ENCODE measurements at regions of chr10 and their contacts with region 1.

Region 1: DNA sequence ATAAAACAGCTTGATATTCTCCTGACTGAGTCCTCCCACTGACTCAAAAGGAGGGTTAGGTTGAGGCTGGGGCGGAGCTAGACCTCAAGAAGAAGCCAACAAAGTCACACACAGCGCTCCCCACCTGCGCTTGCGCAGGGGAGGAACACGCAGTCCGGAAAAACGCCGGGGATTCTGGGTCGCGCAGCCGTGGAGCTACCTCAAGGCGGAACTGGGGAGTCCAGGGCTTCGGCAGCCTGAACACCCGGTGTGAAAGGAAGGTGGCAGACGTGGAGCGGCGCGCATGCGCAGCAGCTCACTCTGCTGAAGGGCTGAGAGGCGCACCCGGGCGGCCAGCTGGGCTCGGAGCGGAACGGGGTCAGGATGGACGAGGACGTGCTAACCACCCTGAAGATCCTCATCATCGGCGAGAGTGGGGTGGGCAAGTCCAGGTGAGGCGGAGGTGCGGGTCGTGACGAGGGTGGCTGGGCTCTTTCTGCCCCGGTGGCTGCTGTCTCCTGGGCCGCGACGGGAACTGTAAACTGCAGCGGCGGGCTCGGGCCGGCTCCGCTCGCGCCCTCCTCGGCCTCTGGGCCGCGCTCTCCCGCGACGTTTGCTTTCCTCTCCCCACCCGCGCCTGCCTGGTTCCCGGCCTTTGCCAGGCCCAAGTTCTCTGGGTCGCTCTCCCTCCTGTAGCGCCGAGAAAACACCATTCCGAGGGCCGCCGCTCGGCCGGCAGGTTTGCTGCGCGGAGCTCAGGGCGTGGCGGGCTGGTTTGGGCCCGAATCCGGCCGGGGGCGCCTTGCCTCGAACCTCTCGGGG is at the start of gene RAB18:
- DNase-seq: peak; percentile 94 to 99 (median 98)
- ATAC-seq: peak; percentile 95
- H3K4me3 ChIP-seq: peak within 1 kb of the TSS; percentile 73 to 82
- H3K4me3 Mint-ChIP-seq: peak within 1 kb of the TSS; percentile 99
- H3K27ac ChIP-seq: peak within 1 kb of the TSS; percentile 81 to 90
- H3K27ac Mint-ChIP-seq: peak within 1 kb of the TSS; percentile 98
- H3K4me1 ChIP-seq: peaks cover 33% of the 10 kb centered on the region
- H3K4me1 Mint-ChIP-seq: peaks cover 52% of the 10 kb centered on the region
- H3K27me3 ChIP-seq: no peaks in the 10 kb centered on the region
- H3K27me3 Mint-ChIP-seq: no peaks in the 10 kb centered on the region
- CTCF ChIP-seq: no peak
- total RNA-seq, gene RAB18: 130 to 146 TPM

Region 2: DNA sequence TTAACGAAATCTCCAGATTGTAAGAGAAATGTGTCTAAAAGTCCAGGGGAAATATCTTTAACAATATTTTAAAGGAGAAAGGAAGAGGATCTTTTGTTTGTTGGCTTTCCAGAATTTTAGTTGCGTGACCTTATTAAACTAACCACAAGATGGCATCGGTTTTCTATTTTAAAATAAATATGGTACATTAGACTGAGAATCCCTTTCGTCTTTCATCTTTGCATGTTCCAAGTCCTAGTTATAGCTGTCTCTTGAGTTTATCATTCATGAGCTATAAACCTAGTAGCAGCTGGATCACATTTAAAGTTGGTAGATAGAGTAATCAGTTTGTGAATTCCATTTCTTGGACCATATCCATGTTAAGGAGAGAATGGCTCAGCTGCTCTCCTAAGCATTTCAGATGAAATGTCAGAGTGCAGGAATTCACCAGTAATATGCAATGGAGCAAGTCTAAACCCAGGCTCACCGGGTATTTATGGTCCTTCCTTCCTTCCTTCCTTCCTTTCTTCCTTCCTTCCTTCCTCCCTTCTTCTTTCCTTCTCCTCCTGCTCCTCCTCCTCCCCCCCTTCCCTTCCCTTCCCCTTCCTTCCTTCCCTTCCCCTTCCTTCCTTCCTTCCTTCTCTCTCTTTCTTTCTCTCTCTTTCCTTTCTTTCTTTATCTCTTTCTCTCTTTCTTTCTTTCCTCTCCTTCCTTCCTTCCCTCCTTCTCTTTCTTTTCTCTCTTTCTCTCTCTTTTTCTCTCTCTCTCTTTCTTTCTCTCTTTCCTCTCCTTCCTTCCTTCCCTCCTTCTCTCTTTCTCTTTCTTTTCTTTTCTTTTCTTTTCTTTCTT is 57.9 kb before region 1 on chr10:
- CTCF ChIA-PET with region 1: interaction called, 14 read pairs
- POLR2A ChIA-PET with region 1: interaction called, 7 read pairs
- intact Hi-C with region 1: loop called in 1 of 2 experiments (anchors 2 kb)
- DNase-seq: peak in 2 of 9 experiments; percentile 38 to 60
- ATAC-seq: peak; percentile 46
- H3K4me3 ChIP-seq: no peak overlapping the region
- H3K4me3 Mint-ChIP-seq: no peak overlapping the region
- H3K27ac ChIP-seq: no peak overlapping the region
- H3K27ac Mint-ChIP-seq: no peak overlapping the region
- H3K4me1 ChIP-seq: peaks cover 9% of the 10 kb centered on the region
- H3K4me1 Mint-ChIP-seq: peaks cover 21% of the 10 kb centered on the region
- H3K27me3 ChIP-seq: no peaks in the 10 kb centered on the region
- H3K27me3 Mint-ChIP-seq: no peaks in the 10 kb centered on the region
- CTCF ChIP-seq: peak; percentile 61

Region 3: DNA sequence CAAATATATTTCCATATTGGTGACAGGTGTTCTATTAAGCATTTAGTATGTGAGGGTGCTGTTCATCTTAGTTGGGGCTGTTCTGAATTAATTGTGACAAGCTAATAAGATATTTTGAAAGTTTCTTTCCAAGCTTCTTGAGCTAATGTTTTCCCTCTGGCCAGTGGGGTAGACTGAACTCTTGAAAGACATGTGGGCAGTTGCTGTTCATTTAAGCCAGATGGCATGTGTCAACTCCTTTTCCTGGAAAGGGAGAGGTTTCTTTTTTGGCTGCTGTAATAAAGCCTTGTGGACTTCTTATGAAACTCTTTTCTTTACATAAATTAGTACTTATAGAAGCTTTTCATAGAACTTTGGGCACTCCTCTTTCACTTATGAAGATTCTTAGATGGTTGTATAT is 21.6 kb after region 1 on chr10:
- CTCF ChIA-PET with region 1: interaction called, 4 read pairs
- POLR2A ChIA-PET with region 1: interaction called, 5 read pairs
- intact Hi-C with region 1: loop called in 1 of 2 experiments (anchors 2 kb)
- DNase-seq: no peak
- ATAC-seq: no peak
- H3K4me3 ChIP-seq: no peak overlapping the region
- H3K4me3 Mint-ChIP-seq: no peak overlapping the region
- H3K27ac ChIP-seq: no peak overlapping the region
- H3K27ac Mint-ChIP-seq: no peak overlapping the region
- H3K4me1 ChIP-seq: peaks cover 5% of the 10 kb centered on the region
- H3K4me1 Mint-ChIP-seq: peaks cover 78% of the 10 kb centered on the region
- H3K27me3 ChIP-seq: no peaks in the 10 kb centered on the region
- H3K27me3 Mint-ChIP-seq: no peaks in the 10 kb centered on the region
- CTCF ChIP-seq: no peak

Region 4: DNA sequence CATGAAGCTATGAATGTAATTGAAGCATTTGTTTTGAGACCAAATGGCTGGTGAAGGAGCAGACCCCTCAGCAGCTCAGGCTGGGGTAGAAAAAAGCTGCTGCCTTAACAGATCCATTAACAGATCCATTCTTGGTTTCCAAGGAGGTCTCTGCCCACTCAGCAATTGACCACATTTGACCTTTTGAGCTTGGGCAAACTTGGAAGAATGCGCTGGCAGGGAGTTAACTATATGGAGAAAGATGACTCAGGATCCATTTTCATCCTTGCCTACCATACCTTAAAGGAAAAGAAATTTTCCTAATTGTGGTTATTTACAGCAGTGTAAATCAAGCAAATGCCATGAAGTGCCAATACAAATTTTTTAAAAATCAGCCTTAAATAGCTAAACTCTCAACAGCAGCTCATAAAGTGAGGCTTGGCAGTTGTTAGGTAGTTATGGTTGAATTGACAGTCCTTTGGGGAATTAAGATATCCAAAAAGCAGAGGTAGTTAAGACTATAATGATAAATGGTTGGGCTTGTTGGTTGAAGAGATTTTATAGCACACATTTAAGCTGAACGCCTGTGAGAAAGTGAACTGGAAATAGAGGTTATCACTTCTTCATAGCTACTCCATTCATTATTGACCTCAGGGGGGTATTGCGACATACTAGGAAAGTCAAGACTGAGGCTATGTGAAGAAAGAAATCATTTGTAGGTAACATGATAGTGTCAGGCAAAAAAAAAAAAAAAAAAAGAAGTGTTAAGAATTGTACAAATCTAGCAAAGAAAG is 157.5 kb after region 1 on chr10:
- CTCF ChIA-PET with region 1: interaction called, 6 read pairs
- POLR2A ChIA-PET with region 1: no interaction called
- intact Hi-C with region 1: loop called in 1 of 2 experiments (anchors 1 kb)
- DNase-seq: no peak
- ATAC-seq: no peak
- H3K4me3 ChIP-seq: no peak overlapping the region
- H3K4me3 Mint-ChIP-seq: no peak overlapping the region
- H3K27ac ChIP-seq: no peak overlapping the region
- H3K27ac Mint-ChIP-seq: no peak overlapping the region
- H3K4me1 ChIP-seq: no peaks in the 10 kb centered on the region
- H3K4me1 Mint-ChIP-seq: no peaks in the 10 kb centered on the region
- H3K27me3 ChIP-seq: peaks cover 0 to 5% of the 10 kb centered on the region in 2 experiments
- H3K27me3 Mint-ChIP-seq: peaks cover 43% of the 10 kb centered on the region
- CTCF ChIP-seq: no peak

Region 5: DNA sequence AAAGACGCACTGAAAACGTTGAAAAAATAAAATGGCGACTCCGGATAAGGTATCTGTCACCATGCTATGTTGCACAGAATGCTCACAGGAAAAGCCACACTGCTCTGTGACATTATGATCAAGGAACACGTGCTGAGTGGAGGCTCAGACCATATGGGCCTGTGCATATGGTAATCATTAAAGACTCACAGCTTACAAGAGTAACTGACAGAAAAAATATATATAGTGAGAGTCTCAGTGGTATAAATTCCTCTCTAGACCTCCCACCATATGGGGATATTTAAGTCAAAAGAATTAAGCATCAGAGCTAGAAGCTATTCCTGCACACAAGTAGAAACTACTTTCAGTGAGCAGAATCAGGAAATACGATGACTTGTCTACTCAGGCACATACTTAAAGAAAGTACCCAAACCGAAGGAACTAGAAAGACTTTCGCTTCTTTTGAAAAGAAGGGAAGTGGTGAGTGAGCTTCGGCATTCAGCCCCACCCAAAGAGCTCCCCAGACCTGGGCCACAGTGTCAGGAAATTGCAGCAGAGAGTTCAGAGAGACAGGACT is 863.8 kb after region 1 on chr10:
- CTCF ChIA-PET with region 1: no interaction called
- POLR2A ChIA-PET with region 1: no interaction called
- intact Hi-C with region 1: loop called in 1 of 2 experiments (anchors 5 kb)
- DNase-seq: peak; percentile 14 to 91 (median 68)
- ATAC-seq: peak; percentile 92
- H3K4me3 ChIP-seq: peak overlapping the region in 1 of 2 experiments; percentile 1
- H3K4me3 Mint-ChIP-seq: peak overlapping the region; percentile 74
- H3K27ac ChIP-seq: peak overlapping the region; percentile 51 to 77
- H3K27ac Mint-ChIP-seq: peak overlapping the region; percentile 96
- H3K4me1 ChIP-seq: peaks cover 52% of the 10 kb centered on the region
- H3K4me1 Mint-ChIP-seq: peaks cover 52% of the 10 kb centered on the region
- H3K27me3 ChIP-seq: no peaks in the 10 kb centered on the region
- H3K27me3 Mint-ChIP-seq: no peaks in the 10 kb centered on the region
- CTCF ChIP-seq: no peak

Region 6: DNA sequence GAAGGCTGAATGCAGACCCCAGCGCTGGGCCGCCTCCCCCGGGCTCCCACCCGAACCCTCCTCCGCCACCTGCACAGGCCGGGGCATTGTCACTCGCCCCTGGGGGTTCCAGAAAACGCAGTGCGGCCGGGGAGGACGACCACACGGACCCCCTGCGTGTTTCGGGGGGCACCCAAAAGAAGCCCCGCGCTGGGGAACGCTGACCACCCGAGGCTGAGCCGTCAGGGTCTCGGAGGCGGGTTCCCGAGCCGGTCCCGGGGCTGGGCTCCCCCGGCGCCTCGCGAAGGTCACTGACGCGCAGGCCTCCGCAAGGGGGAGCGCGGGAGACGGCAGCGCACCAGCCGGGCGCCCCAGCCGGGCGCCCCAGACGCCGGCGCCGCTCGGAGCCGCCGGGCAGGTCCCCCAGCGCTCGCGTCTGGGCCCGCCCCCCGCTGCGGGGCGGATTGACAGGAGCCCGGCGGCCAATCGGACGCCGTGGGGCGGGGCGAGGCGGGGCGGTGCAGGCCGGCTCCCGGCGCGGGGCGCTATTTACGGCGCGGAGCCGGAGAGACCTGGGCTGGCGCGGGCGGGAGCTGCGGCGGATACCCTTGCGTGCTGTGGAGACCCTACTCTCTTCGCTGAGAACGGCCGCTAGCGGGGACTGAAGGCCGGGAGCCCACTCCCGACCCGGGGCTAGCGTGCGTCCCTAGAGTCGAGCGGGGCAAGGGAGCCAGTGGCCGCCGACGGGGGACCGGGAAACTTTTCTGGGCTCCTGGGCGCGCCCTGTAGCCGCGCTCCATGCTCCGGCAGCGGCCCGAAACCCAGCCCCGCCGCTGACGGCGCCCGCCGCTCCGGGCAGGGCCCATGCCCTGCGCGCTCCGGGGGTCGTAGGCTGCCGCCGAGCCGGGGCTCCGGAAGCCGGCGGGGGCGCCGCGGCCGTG is 1173.0 kb after region 1 on chr10 and contains the start of gene BAMBI:
- CTCF ChIA-PET with region 1: no interaction called
- POLR2A ChIA-PET with region 1: no interaction called
- intact Hi-C with region 1: loop called in 1 of 2 experiments (anchors 10 kb)
- DNase-seq: peak; percentile 76 to 95 (median 88)
- ATAC-seq: peak; percentile 96
- H3K4me3 ChIP-seq: peak within 1 kb of the TSS; percentile 53 to 59
- H3K4me3 Mint-ChIP-seq: peak within 1 kb of the TSS; percentile 86
- H3K27ac ChIP-seq: no peak within 1 kb of the TSS
- H3K27ac Mint-ChIP-seq: no peak within 1 kb of the TSS
- H3K4me1 ChIP-seq: peaks cover 34% of the 10 kb centered on the region
- H3K4me1 Mint-ChIP-seq: peaks cover 31% of the 10 kb centered on the region
- H3K27me3 ChIP-seq: peaks cover 19 to 20% of the 10 kb centered on the region in 2 experiments
- H3K27me3 Mint-ChIP-seq: peaks cover 68% of the 10 kb centered on the region
- CTCF ChIP-seq: peak; percentile 40
- total RNA-seq, gene BAMBI: 3.5 to 3.6 TPM